Prostate gland (tissue), 2 donors: ENCODE measurements at regions of chr4 and their contacts with region 1.

Region 1: GRCh38 chr4:24912252-24913118 is at the start of gene CCDC149:
- DNase-seq: peak; percentile 88
- H3K4me3 ChIP-seq: peak within 1 kb of the TSS; percentile 65 to 67
- H3K27ac ChIP-seq: peak within 1 kb of the TSS; percentile 90 to 94
- H3K4me1 ChIP-seq: no peaks in the 10 kb centered on the region
- H3K27me3 ChIP-seq: no peaks in the 10 kb centered on the region
- CTCF ChIP-seq: peak in 2 of 4 experiments; percentile 31 to 32
- POLR2A ChIP-seq: peak; percentile 84
- total RNA-seq, gene CCDC149: 14.0 to 19.6 TPM

Region 2: DNA sequence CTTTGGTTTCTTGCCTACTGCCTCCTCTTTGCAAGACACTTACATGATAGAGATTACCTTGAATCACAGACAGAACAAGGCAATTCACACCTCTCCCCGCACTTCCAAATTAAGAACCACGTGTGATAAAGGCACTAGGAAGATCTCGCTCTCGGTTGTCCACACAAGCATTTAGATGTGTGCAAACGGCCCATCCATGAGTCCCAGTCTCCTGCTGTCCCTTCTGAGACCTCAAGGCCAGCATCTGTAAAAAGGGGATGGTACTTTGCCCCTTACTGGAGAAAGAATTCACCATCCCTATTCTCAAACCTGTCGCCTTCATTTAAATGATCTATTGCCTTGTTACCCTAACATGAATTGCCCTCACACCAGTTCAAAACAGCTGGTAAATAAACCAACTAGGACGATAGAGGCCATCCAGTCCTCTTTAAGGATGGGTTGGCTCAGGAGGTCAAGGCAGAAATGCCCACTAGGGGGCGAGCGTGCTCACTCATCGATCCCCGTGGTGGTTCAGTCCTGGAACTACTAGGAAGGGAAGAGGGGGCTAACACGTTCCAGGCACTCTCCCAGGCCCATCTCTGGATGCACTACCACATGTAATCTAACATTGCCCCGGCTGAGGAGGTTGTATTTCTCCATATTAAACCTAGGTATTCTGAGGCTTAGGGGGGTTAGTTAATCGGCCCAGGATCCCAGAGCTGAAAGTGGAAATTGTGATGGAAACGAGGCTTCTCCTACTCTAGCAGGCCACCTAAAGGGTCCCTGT is 423.9 kb before region 1 on chr4:
- intact Hi-C with region 1: loop called (anchors 10 kb)
- DNase-seq: peak; percentile 66
- H3K4me3 ChIP-seq: no peak overlapping the region
- H3K27ac ChIP-seq: no peak overlapping the region
- H3K4me1 ChIP-seq: no peaks in the 10 kb centered on the region
- H3K27me3 ChIP-seq: no peaks in the 10 kb centered on the region
- CTCF ChIP-seq: peak; percentile 75 to 89 (median 78)
- POLR2A ChIP-seq: no peak

Region 3: DNA sequence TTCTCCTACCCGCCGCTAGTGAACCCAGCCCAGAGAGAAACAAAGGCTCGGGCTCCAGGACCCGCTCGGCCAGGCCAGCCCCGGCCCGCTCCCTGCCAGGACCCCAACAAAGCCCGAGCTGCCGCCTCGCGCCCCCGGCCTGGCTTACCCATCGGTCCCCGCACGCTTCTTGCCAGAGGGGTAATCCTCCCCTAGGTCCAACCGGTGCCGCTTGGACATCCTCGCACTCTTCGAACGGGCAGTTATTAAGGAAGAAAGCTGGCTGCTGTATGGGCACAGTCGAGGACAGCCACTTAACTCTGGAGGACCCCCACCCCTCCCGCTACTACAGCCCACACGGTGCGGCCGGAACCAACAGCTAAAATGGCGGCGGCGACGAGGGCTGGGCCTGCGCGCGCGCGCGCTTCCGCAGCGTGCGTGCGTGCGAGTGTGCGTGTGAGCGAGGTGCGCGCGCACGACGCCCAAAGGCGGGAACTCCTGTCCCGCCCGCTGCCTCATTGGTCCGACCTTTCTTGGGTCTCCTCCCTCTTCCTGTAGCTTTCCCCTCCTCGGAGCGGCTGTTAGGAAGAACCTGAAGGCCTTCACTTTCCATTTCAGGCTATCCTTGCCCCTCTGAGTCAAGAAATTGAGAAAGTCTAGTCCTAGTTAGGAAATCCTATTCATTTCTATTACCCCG is 328.2 kb before region 1 on chr4 and contains the start of gene DHX15:
- intact Hi-C with region 1: loop called (anchors 10 kb)
- DNase-seq: peak; percentile 96
- H3K4me3 ChIP-seq: peak within 1 kb of the TSS; percentile 98 to 99
- H3K27ac ChIP-seq: peak within 1 kb of the TSS; percentile 96 to 97
- H3K4me1 ChIP-seq: no peaks in the 10 kb centered on the region
- H3K27me3 ChIP-seq: no peaks in the 10 kb centered on the region
- CTCF ChIP-seq: peak in 1 of 4 experiments; percentile 9
- POLR2A ChIP-seq: peak; percentile 69
- total RNA-seq, gene DHX15: 86.1 to 109 TPM

Region 4: GRCh38 chr4:24856586-24856985 is 55.9 kb before region 1 on chr4:
- intact Hi-C with region 1: loop called (anchors 2 kb)
- DNase-seq: no peak
- H3K4me3 ChIP-seq: no peak overlapping the region
- H3K27ac ChIP-seq: no peak overlapping the region
- H3K4me1 ChIP-seq: no peaks in the 10 kb centered on the region
- H3K27me3 ChIP-seq: no peaks in the 10 kb centered on the region
- CTCF ChIP-seq: no peak
- POLR2A ChIP-seq: no peak

Region 5: DNA sequence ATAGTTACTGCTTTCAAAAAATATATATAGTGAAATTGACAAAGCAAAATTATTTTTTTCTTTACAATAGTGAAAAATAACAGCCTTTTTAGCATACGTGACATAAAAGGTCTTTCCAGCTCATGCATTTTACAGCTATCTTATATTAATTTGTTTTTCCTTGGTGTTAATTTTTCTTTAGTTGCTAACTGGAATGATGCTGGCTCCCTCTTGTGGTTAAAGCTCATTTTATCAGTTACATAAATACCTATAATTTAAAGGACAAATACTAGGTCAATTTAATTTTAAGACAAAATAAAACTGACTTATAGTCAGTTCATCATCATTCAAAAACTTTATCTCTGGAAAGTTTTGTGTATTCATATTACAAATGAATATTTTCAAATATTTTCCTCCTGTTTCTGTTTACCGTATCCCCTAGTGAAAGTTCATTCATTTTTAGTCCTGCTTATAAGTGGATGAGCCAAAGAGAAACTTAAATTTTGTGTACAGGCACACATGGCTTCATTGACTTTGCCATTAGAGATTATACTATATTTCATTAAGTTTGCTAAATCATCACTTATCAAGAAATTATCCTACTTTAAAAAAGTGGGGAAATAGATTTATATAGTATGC is 454.6 kb after region 1 on chr4:
- intact Hi-C with region 1: loop called (anchors 5 kb)
- DNase-seq: no peak
- H3K4me3 ChIP-seq: no peak overlapping the region
- H3K27ac ChIP-seq: no peak overlapping the region
- H3K4me1 ChIP-seq: no peaks in the 10 kb centered on the region
- H3K27me3 ChIP-seq: no peaks in the 10 kb centered on the region
- CTCF ChIP-seq: peak; percentile 39 to 65 (median 54)
- POLR2A ChIP-seq: no peak